ENCODE measurements at regions of chr6 and their contacts with region 1.

Region 1: GRCh38 chr6:31087494-31088089 is 24.8 kb downstream of the C6orf15 start:
- DNase-seq: peak; percentile 86
- CTCF ChIP-seq: peak; percentile 83

Region 2: GRCh38 chr6:30828027-30828960 is 259.3 kb before region 1 on chr6:
- CTCF ChIA-PET with region 1: interaction called, 53 read pairs
- POLR2A ChIA-PET with region 1: no interaction called
- DNase-seq: peak; percentile 76
- CTCF ChIP-seq: peak; percentile 89

Region 3: DNA sequence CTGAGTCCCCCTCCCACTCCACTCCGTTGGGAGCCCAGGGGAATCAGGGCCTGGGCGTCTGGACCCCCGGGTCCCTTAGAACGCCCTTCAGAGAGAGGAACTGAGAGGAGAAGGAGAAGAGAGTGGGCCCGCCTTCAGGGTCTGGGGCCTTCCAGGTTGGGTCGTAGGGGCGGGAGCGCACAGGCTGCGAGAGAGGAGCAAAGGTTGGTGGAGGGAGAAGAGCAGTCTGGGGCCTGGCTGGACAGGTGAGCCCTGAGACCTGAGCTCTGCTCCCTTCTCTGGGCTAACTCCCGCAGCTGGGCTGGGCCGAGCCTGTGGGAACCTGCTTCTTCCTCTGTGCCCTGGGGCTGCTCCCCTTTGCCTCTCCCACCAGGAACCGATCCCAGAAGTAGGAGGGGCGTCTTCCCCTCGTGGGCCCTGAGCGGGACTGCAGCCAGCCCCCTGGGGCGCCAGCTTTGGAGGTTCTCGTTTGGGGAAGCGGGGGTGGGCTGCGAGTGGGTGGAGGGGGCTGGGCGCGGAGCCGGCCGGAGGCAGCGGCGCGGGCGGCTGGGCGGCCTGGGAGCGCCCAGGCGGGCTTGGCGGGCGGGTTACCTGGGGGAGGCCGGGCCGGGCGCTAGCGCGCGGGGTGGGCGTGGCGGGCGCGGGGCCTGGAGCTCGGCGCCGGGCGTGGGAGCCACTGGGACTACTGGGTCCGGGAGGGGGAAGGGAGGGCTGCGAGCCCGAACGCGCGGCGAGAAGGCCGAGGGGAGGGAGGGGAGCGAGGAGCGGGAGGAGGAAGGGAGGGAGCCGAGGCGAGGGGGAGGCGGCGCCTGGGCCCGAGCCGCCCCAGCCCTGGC is 203.7 kb before region 1 on chr6 and contains the start of gene DDR1:
- CTCF ChIA-PET with region 1: interaction called, 14 read pairs
- POLR2A ChIA-PET with region 1: no interaction called
- DNase-seq: peak; percentile 84
- CTCF ChIP-seq: no peak

Region 4: GRCh38 chr6:31004285-31004684 is 83.3 kb before region 1 on chr6:
- CTCF ChIA-PET with region 1: interaction called, 10 read pairs
- POLR2A ChIA-PET with region 1: no interaction called
- DNase-seq: peak; percentile 41
- CTCF ChIP-seq: no peak

Region 5: DNA sequence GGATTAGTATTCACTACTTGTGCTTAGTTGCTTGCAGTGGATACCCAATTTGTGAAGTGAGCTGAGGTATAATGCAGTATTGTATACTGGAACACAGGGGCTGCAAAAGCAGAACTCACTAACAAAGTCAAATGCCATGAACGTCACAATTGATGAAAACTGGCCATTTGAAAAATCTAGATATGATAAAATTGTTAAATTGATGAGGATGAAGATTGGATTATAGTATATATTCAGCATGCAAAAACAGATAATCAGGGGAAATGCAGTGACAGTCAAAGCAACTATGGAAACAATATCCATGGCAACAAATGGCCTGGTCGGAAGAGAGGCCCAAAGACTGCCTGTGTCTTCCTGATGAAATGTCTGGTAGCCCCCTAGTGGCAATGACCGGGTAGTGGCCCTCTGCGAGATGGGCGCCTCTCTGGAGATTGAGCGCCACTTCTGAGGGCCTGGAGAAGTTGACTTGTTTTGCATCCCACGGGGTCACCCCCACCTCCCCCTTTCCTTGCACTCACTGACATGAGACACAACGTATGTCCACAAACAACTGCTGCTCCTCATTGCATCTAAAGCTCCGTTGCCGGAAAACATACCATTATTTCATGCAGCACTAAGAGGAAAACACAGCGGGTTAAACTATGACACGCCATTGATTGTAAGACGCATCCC is 18.8 kb before region 1 on chr6:
- CTCF ChIA-PET with region 1: interaction called, 51 read pairs
- POLR2A ChIA-PET with region 1: no interaction called
- DNase-seq: peak; percentile 85
- CTCF ChIP-seq: peak; percentile 68

Region 6: DNA sequence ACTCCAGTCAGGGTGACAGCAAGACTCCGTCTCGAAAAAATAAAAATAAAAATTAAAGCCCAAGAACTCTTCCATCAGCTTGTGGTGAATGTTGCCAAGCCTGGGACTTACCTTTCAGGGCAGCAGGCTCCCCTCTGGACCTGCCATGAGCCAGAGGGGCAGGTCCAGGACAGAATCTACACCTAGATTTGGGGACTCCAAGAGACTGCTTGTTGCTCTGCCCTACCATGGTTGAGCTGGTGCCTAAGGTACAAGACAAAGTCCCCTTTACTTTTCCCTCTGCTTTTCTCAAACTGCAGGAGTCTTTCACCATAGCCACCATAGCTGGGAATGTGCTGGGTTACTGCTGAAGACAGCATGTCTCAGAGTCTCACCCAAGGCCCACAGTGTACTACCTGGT is 15.5 kb after region 1 on chr6:
- CTCF ChIA-PET with region 1: interaction called, 20 read pairs
- POLR2A ChIA-PET with region 1: no interaction called
- DNase-seq: no peak
- CTCF ChIP-seq: no peak

Region 7: DNA sequence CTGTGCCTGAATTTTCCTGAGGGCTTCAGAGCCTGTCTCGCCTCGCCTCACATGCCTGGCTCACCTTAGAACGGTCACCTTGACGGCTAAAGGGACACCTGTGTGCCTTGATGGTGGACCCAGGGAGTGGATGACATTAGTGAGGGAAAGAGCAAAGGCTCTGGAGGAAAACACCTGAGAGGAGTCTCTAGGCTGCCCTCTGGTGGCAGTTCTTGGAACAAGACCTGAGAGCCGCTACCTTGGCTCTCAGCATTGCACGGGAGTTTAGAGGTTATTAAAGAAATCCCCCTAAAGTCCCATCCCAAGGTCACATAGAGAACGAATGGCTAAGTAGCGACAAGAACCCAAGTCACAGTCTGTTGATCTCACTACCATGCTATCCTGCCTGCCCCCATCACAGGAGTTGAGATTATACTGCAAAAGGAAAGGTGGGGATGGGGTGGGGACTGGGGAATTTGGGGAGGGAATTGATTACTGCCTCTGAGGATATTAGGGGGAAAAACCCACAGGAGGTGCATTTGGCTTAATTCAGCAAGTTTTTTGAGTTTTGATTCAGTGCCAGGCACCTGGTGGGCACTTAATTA is 40.6 kb after region 1 on chr6:
- CTCF ChIA-PET with region 1: interaction called, 11 read pairs
- POLR2A ChIA-PET with region 1: no interaction called
- DNase-seq: peak; percentile 81
- CTCF ChIP-seq: peak; percentile 76